Breast epithelium (tissue), 4 donors: ENCODE measurements at regions of chr7 and their contacts with region 1.

Region 1: DNA sequence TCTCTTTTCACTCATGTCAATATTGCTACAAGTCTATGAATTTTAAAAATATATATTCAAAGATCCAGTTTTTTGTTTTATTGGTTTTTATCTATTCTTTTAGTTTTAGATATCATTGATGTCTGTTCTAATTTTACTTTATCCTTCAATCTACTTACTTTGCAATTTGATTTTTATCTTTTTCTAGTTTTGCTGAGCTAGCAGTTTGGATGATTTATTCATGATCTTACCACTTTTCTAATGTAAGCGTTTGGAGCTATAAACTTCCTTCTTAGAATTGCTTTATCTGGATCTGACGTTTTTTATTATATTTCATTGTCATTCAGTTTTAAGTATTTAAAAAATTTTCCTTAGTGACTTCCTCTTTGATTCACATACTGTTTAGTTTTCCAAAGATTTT is 664.5 kb upstream of the VSTM2A start:
- DNase-seq: no peak
- H3K4me3 ChIP-seq: no peak overlapping the region
- H3K27ac ChIP-seq: no peak overlapping the region
- H3K4me1 ChIP-seq: no peaks in the 10 kb centered on the region
- H3K27me3 ChIP-seq: no peaks in the 10 kb centered on the region
- CTCF ChIP-seq: no peak
- POLR2A ChIP-seq: no peak

Region 2: DNA sequence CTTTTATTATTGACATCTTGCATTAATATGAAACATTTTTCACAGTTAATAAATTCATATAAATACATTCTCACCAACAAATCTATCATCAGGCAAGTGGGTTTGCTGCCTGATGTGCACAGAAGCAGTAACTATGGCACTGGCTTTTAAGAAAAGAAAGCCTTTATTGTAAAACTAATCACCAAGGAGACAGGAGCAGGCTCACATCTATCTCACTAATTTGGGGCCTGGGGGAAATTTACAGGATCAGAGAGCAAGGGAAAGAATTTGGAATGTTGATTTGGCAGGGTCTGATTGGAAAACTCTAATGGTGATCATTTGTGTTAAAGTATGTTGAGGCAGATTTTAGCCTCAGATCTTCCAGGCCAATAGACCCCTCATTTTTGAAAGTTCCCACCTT is 236.6 kb before region 1 on chr7:
- intact Hi-C with region 1: no loop called
- DNase-seq: no peak
- H3K4me3 ChIP-seq: no peak overlapping the region
- H3K27ac ChIP-seq: no peak overlapping the region
- H3K4me1 ChIP-seq: no peaks in the 10 kb centered on the region
- H3K27me3 ChIP-seq: no peaks in the 10 kb centered on the region
- CTCF ChIP-seq: no peak
- POLR2A ChIP-seq: no peak

Region 3: DNA sequence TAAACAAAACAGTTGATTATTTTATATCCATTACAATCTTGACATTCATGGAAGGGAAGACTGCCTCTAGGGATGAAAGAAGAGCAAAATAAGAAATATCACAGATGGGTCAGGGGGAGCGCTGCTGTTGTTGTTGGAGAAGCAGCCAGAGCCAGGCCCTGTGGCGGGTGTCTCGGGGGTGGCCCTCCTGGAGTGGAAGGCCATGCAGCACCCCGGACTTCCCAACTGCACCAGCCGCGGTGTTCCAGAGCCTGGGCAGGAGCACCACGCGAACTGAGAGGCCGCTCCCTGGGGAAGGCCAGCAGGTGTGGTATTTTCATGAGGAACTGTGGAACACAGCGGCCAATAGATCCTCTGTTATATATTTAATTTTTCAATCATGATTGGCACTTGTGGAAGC is 592.1 kb after region 1 on chr7:
- intact Hi-C with region 1: loop called (anchors 5 kb)
- DNase-seq: no peak
- H3K4me3 ChIP-seq: no peak overlapping the region
- H3K27ac ChIP-seq: no peak overlapping the region
- H3K4me1 ChIP-seq: no peaks in the 10 kb centered on the region
- H3K27me3 ChIP-seq: no peaks in the 10 kb centered on the region
- CTCF ChIP-seq: no peak
- POLR2A ChIP-seq: no peak